Posterior cingulate gyrus (tissue), 11 donors: ENCODE measurements at regions of chr4 and their contacts with region 1.

Region 1: GRCh38 chr4:56435306-56435926 is at the start of gene PPAT:
- DNase-seq: peak; percentile 95 to 100 (median 97)

Region 2: DNA sequence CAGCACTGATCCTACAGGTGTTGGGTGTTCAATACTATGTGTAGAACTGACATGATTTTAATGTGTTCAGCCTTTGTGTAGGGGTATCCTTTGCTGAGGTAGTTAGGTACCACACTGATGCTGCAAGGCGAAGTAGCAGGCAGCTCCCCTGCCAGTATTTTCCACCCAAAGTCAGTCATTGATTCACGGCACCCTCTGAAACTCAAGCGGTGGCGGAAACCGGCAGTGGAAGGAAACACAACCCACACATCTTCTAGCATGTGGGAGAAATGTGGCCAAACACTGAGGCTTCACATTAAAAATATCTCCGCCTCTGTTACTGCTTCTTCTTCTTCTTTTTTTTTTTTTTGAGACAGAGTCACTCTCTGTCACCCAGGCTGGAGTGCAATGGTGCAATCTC is 174.4 kb before region 1 on chr4:
- intact Hi-C with region 1: no loop called
- DNase-seq: peak in 6 of 10 donors; percentile 18 to 83 (median 51)

Region 3: GRCh38 chr4:56387023-56388001 is 48.1 kb before region 1 on chr4 and contains the start of gene AASDH:
- intact Hi-C with region 1: loop called (anchors 1 kb)
- DNase-seq: peak; percentile 89 to 99 (median 94)

Region 4: GRCh38 chr4:56467284-56468096 is 32.1 kb after region 1 on chr4 and contains the start of gene SRP72:
- intact Hi-C with region 1: loop called (anchors 5 kb)
- DNase-seq: peak; percentile 83 to 98 (median 90)

Region 5: DNA sequence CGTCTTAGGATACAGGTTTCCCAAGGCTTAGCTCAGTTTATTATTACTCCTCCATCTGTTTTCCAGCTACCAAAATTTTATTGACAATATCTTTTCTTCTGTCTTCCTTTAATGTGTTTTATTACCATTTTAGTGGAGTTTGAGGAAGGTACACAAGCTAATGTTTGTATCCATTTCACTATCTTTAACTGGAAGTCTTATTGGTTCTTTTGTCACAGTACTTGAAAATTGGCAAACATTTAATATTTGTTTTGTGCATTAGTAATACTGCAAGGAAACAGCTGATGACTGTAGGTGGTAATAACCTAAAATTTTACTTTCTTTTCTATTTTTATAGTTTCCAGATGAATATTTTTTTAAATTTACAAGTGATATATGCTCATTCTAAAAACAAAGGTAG is 60.8 kb after region 1 on chr4:
- intact Hi-C with region 1: no loop called
- DNase-seq: no peak

Region 6: GRCh38 chr4:56544573-56545131 is 109.2 kb after region 1 on chr4:
- intact Hi-C with region 1: loop called (anchors 5 kb)
- DNase-seq: peak; percentile 80 to 98 (median 90)

Region 7: DNA sequence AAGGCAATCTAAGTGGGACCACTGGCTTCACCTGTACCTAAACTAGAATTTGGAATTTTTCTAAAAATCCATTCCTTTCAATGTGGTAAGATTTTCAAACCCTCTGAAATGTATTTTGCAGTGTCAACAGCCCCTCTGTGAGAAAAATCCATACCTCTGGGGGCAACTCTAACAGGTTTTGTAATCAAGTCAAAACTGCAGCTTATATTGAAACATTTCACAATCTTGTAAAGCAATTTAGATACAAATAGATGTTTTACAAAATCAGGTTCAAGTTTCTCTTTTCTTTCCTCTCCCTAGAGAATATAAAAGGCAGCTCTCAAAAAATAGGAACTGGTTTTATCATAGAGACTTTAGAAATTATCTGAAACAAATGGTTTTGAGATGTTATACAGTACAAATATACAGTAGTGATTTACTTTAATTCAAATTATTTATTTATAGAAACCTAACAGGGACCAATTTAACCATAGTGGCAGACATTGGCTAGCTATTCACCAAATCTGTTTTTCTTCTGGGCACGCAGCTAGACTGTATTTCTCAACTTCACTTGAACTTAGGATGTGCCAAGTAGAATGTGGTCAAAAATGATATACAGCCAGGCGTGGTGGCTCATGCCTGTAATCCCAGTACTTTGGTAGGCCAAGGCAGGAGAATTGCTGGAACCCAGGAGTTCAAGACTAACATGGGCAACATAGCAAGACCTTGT is 422.3 kb after region 1 on chr4:
- intact Hi-C with region 1: no loop called
- DNase-seq: no peak

Region 8: GRCh38 chr4:56977321-56978012 is 542.1 kb after region 1 on chr4 and contains the start of gene NOA1:
- intact Hi-C with region 1: loop called (anchors 10 kb)
- DNase-seq: peak; percentile 93 to 100 (median 96)